Left lung (tissue), 14 donors: ENCODE measurements at regions of chr5 and their contacts with region 1.

Region 1: GRCh38 chr5:11261226-11261625 is 500.2 kb upstream of the DAP start:
- DNase-seq: no peak
- ATAC-seq: no peak
- H3K4me3 ChIP-seq: no peak overlapping the region
- H3K27ac ChIP-seq: no peak overlapping the region
- H3K4me1 ChIP-seq: no peaks in the 10 kb centered on the region
- H3K27me3 ChIP-seq: no peaks in the 10 kb centered on the region
- CTCF ChIP-seq: no peak

Region 2: DNA sequence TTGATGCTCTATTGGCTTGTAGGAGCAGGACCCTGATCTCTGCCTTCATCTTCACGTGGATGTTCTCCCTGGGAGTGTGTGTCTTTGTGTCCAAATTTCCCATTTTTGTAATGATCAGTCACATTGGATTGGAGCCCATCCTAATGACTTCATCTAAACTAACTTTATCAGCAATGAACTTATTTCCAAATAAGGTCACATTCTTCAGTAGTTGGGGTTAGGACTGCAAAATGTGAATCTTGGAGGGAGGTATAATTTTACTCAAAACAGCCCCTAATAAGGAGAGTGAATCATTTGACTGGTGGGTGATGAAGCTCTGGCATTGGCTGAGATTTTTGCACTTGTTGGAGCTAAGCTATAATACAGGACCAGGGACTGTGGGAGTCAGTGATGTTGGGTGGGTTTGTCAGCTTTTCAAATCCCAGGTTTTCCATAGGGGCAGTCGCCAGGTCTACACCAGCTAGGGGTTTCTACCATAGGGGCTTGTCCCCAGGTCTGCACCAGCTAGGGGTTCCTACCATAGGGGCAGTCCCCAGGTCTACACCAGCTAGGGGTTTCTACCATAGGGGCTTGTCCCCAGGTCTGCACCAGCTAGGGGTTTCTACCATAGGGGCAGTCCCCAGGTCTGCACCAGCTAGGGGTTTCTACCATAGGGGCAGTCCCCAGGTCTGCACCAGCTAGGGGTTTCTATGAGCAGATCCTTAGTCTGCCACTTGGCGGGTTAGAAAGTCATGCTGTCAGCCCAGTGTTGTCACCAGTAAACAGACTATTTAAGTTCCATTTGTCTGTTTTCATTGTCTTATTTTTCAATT is 117.6 kb before region 1 on chr5:
- intact Hi-C with region 1: no loop called
- DNase-seq: no peak
- ATAC-seq: no peak
- H3K4me3 ChIP-seq: no peak overlapping the region
- H3K27ac ChIP-seq: no peak overlapping the region
- H3K4me1 ChIP-seq: no peaks in the 10 kb centered on the region
- H3K27me3 ChIP-seq: no peaks in the 10 kb centered on the region
- CTCF ChIP-seq: no peak

Region 3: GRCh38 chr5:11361768-11362167 is 100.5 kb after region 1 on chr5:
- intact Hi-C with region 1: no loop called
- DNase-seq: no peak
- ATAC-seq: no peak
- H3K4me3 ChIP-seq: no peak overlapping the region
- H3K27ac ChIP-seq: no peak overlapping the region
- H3K4me1 ChIP-seq: no peaks in the 10 kb centered on the region
- H3K27me3 ChIP-seq: no peaks in the 10 kb centered on the region
- CTCF ChIP-seq: no peak

Region 4: GRCh38 chr5:11494340-11494739 is 233.1 kb after region 1 on chr5:
- intact Hi-C with region 1: loop called in 1 of 2 experiments (anchors 10 kb)
- DNase-seq: no peak
- ATAC-seq: no peak
- H3K4me3 ChIP-seq: no peak overlapping the region
- H3K27ac ChIP-seq: no peak overlapping the region
- H3K4me1 ChIP-seq: no peaks in the 10 kb centered on the region
- H3K27me3 ChIP-seq: no peaks in the 10 kb centered on the region
- CTCF ChIP-seq: peak in 1 of 2 donors; percentile 18